ENCODE measurements at regions of chr11 and their contacts with region 1.

Region 1: DNA sequence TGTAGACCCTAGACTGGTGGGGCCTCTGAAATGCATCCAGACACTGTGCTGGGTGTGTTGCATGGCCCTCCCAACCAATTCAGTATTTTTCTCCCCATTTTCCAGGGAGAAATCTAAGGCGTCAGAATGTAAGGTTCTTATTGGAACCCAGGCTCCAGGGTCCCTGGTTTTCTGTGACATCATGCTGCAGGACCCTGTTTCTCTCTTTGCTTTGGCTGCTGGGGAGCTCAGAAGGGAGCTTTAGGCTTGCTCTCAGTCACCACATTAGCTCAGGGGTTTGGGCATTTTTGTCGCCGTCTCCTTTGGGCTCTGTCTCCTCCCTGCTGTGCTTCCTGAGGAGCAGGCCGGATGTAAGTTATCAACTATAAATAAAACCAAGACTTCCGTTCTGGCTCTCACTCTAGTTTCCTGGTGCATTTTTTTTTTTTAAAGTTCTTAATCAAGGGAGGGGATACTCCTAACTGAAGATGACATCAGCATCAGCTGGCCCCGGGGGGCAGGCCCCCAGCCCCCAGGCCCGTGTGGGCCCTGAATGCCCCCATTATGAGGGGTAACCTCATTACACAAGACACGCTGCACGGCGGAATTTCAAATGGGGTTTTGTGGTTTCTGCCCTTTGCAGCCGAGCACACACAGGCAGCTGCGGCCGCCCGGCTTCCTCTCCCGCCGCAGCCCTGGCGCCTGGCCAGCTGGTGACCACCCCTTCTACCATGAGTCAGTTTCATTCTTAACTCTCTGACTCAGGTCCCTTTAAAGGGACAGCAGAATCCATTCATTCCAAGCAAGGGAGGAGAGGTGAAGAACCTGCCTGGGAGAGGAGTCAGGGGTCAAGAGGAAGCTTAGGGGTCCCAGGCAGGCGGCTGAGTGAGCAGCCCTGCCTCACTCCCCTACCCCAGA is 3.2 kb downstream of the MYEOV start:
- DNase-seq: peak; percentile 94
- H3K4me3 Mint-ChIP-seq: peak overlapping the region; percentile 61
- H3K27ac Mint-ChIP-seq: peak overlapping the region; percentile 91
- H3K4me1 Mint-ChIP-seq: peaks cover 58% of the 10 kb centered on the region
- H3K27me3 Mint-ChIP-seq: peaks cover 2% of the 10 kb centered on the region

Region 2: DNA sequence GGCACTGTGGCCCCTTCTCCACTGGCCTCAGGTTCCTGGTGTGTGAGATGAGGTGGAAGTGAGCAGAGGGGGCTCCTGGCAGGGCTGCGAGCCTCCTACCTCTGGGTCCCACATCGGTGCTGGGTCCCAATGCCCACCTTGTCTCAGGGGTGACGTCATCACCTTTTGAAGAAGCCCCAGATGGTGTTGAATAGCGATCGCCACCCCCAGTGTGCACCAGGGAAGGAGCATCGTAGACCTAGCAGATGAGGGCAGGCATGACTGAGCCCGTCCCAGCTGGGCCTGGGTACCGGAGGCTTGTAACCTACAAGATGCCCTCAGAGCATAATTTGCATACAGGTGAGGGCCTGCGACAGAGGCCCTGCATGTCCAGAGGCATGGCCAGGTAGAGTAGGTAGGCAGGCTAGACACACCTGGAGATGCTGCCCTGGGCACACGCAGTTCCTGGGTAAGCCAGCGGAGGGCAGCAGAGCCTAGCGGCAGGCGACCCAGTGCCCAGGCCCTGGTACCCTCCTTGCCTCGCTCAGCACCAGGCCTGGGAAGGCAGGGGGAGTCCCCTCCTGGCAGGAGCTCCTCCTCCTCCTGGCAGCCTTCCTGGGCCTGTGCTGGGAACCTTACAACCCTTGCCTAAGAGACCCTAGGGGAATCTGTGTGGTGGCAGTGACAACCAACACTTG is 195.9 kb before region 1 on chr11:
- intact Hi-C with region 1: loop called (anchors 2 kb)
- DNase-seq: peak; percentile 92
- H3K4me3 Mint-ChIP-seq: no peak overlapping the region
- H3K27ac Mint-ChIP-seq: no peak overlapping the region
- H3K4me1 Mint-ChIP-seq: peaks cover 3% of the 10 kb centered on the region
- H3K27me3 Mint-ChIP-seq: no peaks in the 10 kb centered on the region

Region 3: GRCh38 chr11:69240332-69241074 is 56.6 kb before region 1 on chr11:
- intact Hi-C with region 1: loop called (anchors 1 kb)
- DNase-seq: no peak
- H3K4me3 Mint-ChIP-seq: no peak overlapping the region
- H3K27ac Mint-ChIP-seq: peak overlapping the region; percentile 21
- H3K4me1 Mint-ChIP-seq: peaks cover 28% of the 10 kb centered on the region
- H3K27me3 Mint-ChIP-seq: peaks cover 10% of the 10 kb centered on the region

Region 4: GRCh38 chr11:69337211-69337721 is 40.1 kb after region 1 on chr11:
- intact Hi-C with region 1: loop called (anchors 1 kb)
- DNase-seq: peak; percentile 79
- H3K4me3 Mint-ChIP-seq: peak overlapping the region; percentile 61
- H3K27ac Mint-ChIP-seq: peak overlapping the region; percentile 96
- H3K4me1 Mint-ChIP-seq: peaks cover 43% of the 10 kb centered on the region
- H3K27me3 Mint-ChIP-seq: peaks cover 4% of the 10 kb centered on the region

Region 5: DNA sequence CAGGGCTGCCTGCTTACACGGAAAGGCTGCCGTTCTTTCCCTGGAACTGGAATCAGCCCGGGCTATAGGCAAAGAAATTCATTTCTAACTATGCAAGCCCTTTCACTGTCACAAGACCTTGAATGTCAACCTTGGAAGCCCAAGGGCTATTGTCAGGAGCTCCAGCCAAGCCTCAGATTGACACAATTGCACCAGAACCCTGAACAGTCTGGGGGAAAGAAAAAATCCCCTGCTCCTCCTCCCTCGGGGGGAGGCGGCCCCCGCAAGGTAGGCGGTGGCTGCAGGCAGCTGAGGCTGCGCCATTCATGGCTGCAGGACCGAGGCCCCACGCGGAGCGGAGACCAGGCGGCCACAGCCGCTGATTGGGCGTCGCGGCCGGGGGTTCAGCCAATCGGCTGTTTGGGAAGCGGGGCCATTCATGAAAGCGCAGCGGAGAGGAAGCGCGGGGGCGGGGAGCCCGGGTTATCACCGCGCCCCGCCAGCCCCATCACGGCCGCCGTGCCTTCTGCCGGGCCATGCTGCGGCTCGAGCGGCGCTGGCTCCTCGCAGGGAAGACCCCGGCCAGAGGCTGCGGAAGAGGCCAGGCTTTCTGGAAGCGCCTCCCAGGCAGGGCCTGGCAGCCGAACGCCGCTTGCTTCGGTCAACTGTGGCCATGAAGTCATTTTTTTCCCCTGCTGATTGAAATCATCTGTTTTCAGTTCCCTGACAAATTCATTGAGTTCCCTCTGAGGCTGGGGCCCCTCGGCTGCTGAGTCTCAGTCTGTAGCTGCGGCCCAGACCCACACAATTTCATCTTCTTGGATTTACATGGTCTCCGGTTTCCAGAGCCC is 146.2 kb after region 1 on chr11:
- intact Hi-C with region 1: loop called (anchors 2 kb)
- DNase-seq: peak; percentile 92
- H3K4me3 Mint-ChIP-seq: peak overlapping the region; percentile 72
- H3K27ac Mint-ChIP-seq: peak overlapping the region; percentile 60
- H3K4me1 Mint-ChIP-seq: peaks cover 11% of the 10 kb centered on the region
- H3K27me3 Mint-ChIP-seq: peaks cover 13% of the 10 kb centered on the region

Region 6: GRCh38 chr11:69499186-69499917 is 202.2 kb after region 1 on chr11:
- intact Hi-C with region 1: no loop called
- DNase-seq: no peak
- H3K4me3 Mint-ChIP-seq: no peak overlapping the region
- H3K27ac Mint-ChIP-seq: no peak overlapping the region
- H3K4me1 Mint-ChIP-seq: peaks cover 5% of the 10 kb centered on the region
- H3K27me3 Mint-ChIP-seq: no peaks in the 10 kb centered on the region

Region 7: GRCh38 chr11:69554894-69555293 is 257.8 kb after region 1 on chr11:
- intact Hi-C with region 1: loop called (anchors 1 kb)
- DNase-seq: no peak
- H3K4me3 Mint-ChIP-seq: no peak overlapping the region
- H3K27ac Mint-ChIP-seq: no peak overlapping the region
- H3K4me1 Mint-ChIP-seq: peaks cover 16% of the 10 kb centered on the region
- H3K27me3 Mint-ChIP-seq: peaks cover 5% of the 10 kb centered on the region

Measured in activated CD4-positive, alpha-beta T cell treated with anti-CD3 and anti-CD28 coated beads, Interleukin-2, amount 10 ng/mL, durations not matched to agents 24 days and 14 days (primary cell).